Breast epithelium (tissue), 4 donors: ENCODE measurements at regions of chr16 and their contacts with region 1.

Region 1: DNA sequence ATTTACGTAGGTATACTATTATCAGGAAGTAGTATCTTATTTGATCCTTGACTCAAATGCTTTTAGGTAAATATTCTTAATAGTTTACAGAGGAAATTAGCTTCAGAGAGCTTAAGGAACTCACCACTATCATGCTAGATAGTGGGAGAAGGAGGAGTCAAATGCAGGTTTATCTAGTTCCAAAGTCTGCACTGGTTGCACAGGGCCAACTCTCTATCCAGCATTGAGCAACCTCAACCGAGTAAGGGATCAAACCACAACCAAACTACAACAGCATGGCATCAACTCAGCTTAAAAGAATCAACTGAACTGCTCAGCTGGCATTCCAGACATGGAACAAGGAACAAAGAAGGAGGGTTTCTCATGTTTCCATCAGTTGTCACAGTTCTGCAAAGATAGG is 306.0 kb downstream of the MAF start:
- DNase-seq: no peak
- H3K4me3 ChIP-seq: no peak overlapping the region
- H3K27ac ChIP-seq: no peak overlapping the region
- H3K4me1 ChIP-seq: no peaks in the 10 kb centered on the region
- H3K27me3 ChIP-seq: no peaks in the 10 kb centered on the region
- CTCF ChIP-seq: no peak
- POLR2A ChIP-seq: no peak

Region 2: GRCh38 chr16:77729951-77730350 is 1564.6 kb before region 1 on chr16:
- intact Hi-C with region 1: loop called (anchors 5 kb)
- DNase-seq: no peak
- H3K4me3 ChIP-seq: no peak overlapping the region
- H3K27ac ChIP-seq: no peak overlapping the region
- H3K4me1 ChIP-seq: no peaks in the 10 kb centered on the region
- H3K27me3 ChIP-seq: no peaks in the 10 kb centered on the region
- CTCF ChIP-seq: no peak
- POLR2A ChIP-seq: no peak

Region 3: DNA sequence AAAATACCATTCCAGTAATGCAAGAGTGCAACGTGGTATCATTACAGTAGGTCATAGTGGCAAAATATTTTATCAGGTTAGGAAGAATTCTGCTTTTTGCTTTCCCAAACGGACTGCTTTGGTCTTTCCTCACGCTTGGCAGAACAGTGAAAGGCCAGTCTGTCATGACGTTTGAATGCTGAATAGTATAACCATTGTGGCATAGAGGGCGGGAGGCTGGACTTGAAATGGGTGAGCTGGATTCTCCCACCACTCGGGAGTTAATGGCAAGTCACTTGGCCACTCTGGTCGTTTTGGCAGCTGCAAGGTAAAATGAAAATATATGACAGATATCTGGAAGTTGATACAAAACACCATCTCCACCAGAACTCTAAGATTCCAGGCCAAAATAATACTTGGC is 85.3 kb before region 1 on chr16:
- intact Hi-C with region 1: no loop called
- DNase-seq: no peak
- H3K4me3 ChIP-seq: no peak overlapping the region
- H3K27ac ChIP-seq: no peak overlapping the region
- H3K4me1 ChIP-seq: no peaks in the 10 kb centered on the region
- H3K27me3 ChIP-seq: no peaks in the 10 kb centered on the region
- CTCF ChIP-seq: no peak
- POLR2A ChIP-seq: no peak

Region 4: DNA sequence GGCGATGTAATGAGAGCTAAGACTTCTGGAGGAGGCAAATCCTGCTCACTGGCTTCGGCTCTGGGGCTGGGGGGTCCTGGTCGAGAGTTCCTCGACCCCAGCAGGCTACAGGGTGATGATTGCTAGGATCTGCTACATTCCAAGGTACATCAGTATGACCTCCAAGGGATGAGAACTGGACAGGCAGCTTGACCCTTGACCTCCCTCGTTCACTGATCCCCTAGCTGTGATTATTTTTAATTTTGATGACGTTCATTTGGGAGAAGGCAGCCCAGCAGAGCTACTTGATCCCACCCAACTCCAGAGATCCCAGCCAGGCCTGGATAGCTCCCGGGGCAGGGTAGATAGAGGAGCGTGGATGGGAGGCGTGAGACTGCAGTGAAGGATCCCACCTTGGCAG is 63.6 kb after region 1 on chr16:
- intact Hi-C with region 1: loop called (anchors 2 kb)
- DNase-seq: no peak
- H3K4me3 ChIP-seq: no peak overlapping the region
- H3K27ac ChIP-seq: no peak overlapping the region
- H3K4me1 ChIP-seq: no peaks in the 10 kb centered on the region
- H3K27me3 ChIP-seq: no peaks in the 10 kb centered on the region
- CTCF ChIP-seq: no peak
- POLR2A ChIP-seq: no peak